Left ventricle myocardium superior (tissue), 1 donor: ENCODE measurements at regions of chr7 and their contacts with region 1.

Region 1: DNA sequence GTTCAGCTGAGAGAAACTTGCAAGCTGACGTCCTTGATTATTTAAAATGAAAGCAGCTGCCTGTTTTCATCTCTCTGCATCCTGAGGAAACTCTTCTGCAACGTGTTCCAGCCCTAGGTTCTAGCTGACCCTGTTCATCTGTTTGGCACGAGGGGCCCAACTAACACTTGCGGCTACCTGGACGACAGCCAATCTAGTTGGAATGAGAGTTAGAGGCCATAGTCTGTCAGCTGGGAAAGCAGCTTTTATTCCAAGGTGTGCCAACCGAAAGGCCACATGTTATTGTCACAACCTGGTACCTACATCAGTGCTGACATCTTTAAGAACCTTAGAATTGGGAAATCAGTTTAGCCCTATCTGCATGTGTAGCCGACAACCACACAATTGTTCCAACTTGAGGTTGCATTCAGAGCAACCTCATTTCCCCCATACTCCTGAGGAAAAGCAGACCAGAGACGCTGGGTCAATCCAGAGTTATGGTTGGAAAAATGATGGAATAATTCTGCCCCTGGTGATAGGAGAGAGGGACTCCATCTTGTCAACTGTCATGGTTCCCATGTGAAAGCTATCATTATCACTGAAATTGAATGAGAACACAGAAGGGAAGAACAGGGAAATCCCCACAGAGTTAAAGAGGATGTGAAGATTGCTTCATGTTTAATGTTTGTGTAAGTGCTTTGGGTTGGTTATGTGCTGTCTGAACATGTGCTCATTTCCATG is 121.6 kb downstream of the EGFR start:
- DNase-seq: peak; percentile 57
- ATAC-seq: peak; percentile 89

Region 2: GRCh38 chr7:55073945-55074499 is 66.4 kb before region 1 on chr7:
- intact Hi-C with region 1: loop called (anchors 10 kb)
- DNase-seq: peak; percentile 59
- ATAC-seq: peak; percentile 67

Region 3: GRCh38 chr7:55206235-55207029 is 66.1 kb after region 1 on chr7:
- intact Hi-C with region 1: no loop called
- DNase-seq: no peak
- ATAC-seq: no peak